Sciatic nerve (tissue), 2 donors: ENCODE measurements at regions of chr3 and their contacts with region 1.

Region 1: GRCh38 chr3:147377412-147378367 is 28.7 kb downstream of the ZIC4 start:
- DNase-seq: no peak
- ATAC-seq: peak; percentile 20

Region 2: GRCh38 chr3:147421184-147421912 is 43.7 kb after region 1 on chr3:
- intact Hi-C with region 1: loop called (anchors 10 kb)
- DNase-seq: no peak
- ATAC-seq: no peak